Activated naive CD4-positive, alpha-beta T cell treated with anti-CD3 and anti-CD28 coated beads for 36 hours (primary cell): ENCODE measurements at regions of chr10 and their contacts with region 1.

Region 1: DNA sequence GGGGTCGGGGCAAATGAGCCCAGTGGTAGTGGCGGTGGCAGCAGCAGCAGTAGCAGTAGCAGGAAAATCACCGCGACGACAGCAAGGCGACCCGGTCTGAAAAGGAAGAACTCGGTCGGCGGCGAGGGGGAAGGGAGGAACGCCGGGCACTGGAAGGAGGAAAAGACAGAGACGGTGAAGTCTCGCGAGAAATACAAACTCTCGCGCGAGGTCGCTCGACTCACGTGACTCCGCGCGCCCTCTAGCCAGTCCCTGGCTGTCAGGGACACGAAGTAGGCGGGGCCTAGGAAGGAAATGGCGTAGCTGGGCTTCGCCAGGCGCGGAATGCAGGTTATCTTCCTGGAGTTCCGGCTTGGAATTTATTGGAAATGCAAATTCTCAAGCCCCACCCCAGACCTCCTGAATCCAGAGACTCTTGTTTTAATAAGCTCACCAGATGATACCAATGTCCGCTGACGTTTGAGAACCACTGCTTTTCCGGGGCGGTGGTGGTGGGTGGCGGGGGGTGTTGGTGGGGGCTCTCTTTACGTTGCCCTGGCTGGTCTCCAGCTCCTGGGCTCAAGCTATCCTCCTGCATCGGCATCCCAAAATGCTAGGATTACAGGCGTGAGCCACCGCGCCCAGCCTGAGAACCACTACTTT is at the start of gene SMNDC1:
- DNase-seq: peak; percentile 99
- H3K4me3 Mint-ChIP-seq: peak within 1 kb of the TSS; percentile 95
- H3K27ac Mint-ChIP-seq: peak within 1 kb of the TSS; percentile 97
- H3K4me1 Mint-ChIP-seq: peaks cover 51% of the 10 kb centered on the region
- H3K27me3 Mint-ChIP-seq: no peaks in the 10 kb centered on the region
- total RNA-seq, gene SMNDC1: 42.4 to 46.2 TPM

Region 2: DNA sequence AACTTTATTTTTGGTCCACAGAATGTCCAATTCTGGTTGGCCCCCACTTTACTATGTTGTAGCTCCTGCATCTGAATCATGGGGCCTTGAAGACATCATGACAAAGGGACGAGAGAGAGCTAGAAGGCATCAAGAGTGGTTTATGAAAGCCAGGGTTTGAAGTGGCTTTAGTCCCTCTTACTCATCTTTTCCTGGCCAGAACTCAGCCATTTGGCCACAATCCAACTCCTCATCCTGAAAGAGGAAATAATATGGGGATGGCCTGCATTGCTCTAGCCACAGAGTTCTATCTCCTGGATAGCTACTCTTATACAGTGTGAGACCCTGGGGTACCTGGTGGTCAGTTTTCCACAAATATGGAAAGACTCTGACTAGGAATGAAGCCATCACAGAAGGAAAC is 800.5 kb before region 1 on chr10:
- CTCF ChIA-PET with region 1: no interaction called
- intact Hi-C with region 1: no loop called
- DNase-seq: no peak
- H3K4me3 Mint-ChIP-seq: no peak overlapping the region
- H3K27ac Mint-ChIP-seq: no peak overlapping the region
- H3K4me1 Mint-ChIP-seq: no peaks in the 10 kb centered on the region
- H3K27me3 Mint-ChIP-seq: no peaks in the 10 kb centered on the region

Region 3: GRCh38 chr10:110210674-110211464 is 94.0 kb before region 1 on chr10:
- CTCF ChIA-PET with region 1: interaction called, 5 read pairs
- intact Hi-C with region 1: loop called (anchors 1 kb)
- DNase-seq: peak; percentile 97
- H3K4me3 Mint-ChIP-seq: peak overlapping the region; percentile 96
- H3K27ac Mint-ChIP-seq: peak overlapping the region; percentile 97
- H3K4me1 Mint-ChIP-seq: peaks cover 50% of the 10 kb centered on the region
- H3K27me3 Mint-ChIP-seq: peaks cover 3% of the 10 kb centered on the region

Region 4: GRCh38 chr10:110354322-110354766 is 49.4 kb after region 1 on chr10:
- CTCF ChIA-PET with region 1: interaction called, 21 read pairs
- intact Hi-C with region 1: loop called (anchors 1 kb)
- DNase-seq: peak; percentile 98
- H3K4me3 Mint-ChIP-seq: peak overlapping the region; percentile 74
- H3K27ac Mint-ChIP-seq: peak overlapping the region; percentile 99
- H3K4me1 Mint-ChIP-seq: peaks cover 60% of the 10 kb centered on the region
- H3K27me3 Mint-ChIP-seq: no peaks in the 10 kb centered on the region

Region 5: GRCh38 chr10:110512461-110513187 is 207.7 kb after region 1 on chr10:
- CTCF ChIA-PET with region 1: interaction called, 10 read pairs
- intact Hi-C with region 1: no loop called
- DNase-seq: peak; percentile 86
- H3K4me3 Mint-ChIP-seq: no peak overlapping the region
- H3K27ac Mint-ChIP-seq: peak overlapping the region; percentile 80
- H3K4me1 Mint-ChIP-seq: peaks cover 51% of the 10 kb centered on the region
- H3K27me3 Mint-ChIP-seq: no peaks in the 10 kb centered on the region

Region 6: DNA sequence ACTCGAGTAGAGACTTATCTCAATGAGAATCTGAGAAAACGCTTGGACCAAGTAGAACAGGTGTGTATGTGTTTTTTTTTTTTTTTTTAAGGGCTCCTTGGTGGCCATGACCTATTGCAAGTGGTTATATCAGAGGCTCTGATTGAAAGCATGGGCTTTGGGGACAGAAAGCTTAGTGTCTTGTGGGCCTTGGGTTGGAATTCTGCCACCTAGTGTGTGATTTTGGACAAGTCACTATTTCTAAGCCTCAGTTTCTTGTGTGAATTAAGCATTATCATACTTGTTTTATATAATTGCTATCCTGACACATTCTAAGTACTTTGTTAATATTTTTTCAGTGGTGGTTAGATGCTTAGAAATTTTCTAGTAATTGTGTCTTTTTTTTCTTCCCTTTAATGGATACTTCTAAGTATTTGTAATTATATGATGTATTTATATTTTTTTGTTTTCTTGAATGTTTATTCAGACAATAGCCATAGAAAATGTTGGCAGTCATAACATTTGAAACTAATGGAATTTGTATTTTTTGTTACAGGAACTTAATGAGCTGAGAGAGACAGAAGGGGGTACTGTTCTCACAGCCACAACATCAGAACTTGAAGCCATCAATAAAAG is 295.7 kb after region 1 on chr10:
- CTCF ChIA-PET with region 1: interaction called, 14 read pairs
- intact Hi-C with region 1: loop called (anchors 1 kb)
- DNase-seq: peak; percentile 42
- H3K4me3 Mint-ChIP-seq: no peak overlapping the region
- H3K27ac Mint-ChIP-seq: no peak overlapping the region
- H3K4me1 Mint-ChIP-seq: no peaks in the 10 kb centered on the region
- H3K27me3 Mint-ChIP-seq: no peaks in the 10 kb centered on the region

Region 7: DNA sequence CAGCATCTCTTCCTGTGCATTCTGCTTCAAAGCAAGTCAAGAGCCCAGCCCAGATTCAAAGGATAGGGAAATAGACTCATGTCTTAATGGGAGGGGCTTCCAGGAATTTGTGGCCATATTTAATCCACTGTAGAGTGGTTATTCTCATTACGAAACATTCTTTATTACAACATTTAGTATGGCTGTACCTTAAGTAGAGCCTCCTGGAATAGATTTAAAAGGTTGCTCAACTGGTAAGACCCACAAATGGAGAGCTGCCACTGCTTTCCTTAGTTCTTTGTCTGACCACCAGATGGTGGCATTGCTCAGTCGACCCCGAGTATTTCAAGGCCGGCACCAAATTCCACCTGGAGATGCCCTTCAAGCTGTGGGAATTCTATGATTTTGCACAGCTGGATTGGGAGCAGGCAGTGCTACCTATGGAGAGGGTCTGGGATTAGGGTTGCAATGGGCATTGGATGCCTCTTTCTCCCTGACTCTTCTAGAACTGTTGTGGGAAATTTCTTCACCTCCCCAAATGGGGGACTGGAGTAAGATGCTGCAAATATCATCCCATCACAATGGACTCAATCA is 441.4 kb after region 1 on chr10:
- CTCF ChIA-PET with region 1: no interaction called
- intact Hi-C with region 1: loop called (anchors 2 kb)
- DNase-seq: peak; percentile 64
- H3K4me3 Mint-ChIP-seq: no peak overlapping the region
- H3K27ac Mint-ChIP-seq: no peak overlapping the region
- H3K4me1 Mint-ChIP-seq: peaks cover 72% of the 10 kb centered on the region
- H3K27me3 Mint-ChIP-seq: no peaks in the 10 kb centered on the region

Region 8: GRCh38 chr10:111076191-111076681 is 771.3 kb after region 1 on chr10:
- CTCF ChIA-PET with region 1: no interaction called
- intact Hi-C with region 1: loop called (anchors 5 kb)
- DNase-seq: peak; percentile 68
- H3K4me3 Mint-ChIP-seq: peak overlapping the region; percentile 71
- H3K27ac Mint-ChIP-seq: no peak overlapping the region
- H3K4me1 Mint-ChIP-seq: peaks cover 11% of the 10 kb centered on the region
- H3K27me3 Mint-ChIP-seq: peaks cover 55% of the 10 kb centered on the region